AG04450 (cell line): ENCODE measurements at regions of chr1 and their contacts with region 1.

Region 1: DNA sequence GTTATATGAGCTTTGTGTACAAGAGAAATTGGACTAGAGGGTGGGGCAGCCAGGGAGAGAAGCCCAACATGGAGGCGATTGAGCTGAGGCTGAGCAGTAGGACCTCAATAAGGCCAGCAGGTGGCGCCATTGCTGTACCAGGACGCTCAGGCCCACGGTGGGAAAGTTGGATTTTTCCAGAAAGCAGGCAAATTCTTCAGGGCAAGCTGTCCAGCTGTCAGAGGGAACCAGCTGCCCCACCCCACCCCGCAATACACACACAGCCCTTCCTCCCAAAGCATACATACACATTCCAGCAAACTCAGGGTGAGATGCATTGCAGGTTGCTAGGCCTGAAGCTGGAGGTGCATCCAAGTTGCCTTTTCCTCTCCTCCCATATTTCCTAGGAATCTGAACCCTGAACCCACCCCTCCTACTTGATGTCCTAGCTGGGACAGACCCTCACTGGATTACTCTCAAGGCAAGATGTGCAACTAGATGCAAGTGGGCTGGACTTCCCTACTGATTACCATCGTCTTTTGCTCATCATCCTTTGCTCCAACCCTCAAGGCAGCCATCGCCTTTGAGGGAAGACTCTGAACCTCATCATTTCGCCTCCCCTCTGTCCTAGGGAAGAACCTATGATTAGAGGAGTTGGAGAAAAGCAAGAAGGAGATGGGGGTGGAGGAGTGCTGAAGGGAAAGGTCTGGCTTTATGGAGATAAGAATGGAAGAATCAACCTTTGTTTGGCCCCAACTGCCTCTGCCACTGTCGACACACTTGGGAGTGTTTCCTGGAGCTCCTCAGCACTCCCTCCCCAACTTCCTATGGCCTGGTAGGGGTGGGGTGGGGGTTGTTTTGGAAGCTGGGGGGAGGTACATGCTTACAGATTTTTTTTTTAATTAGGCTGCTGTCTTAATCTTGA is 25.5 kb downstream of the CD34 start:
- DNase-seq: peak; percentile 76
- H3K4me3 ChIP-seq: no peak overlapping the region
- H3K27ac ChIP-seq: no peak overlapping the region
- H3K27me3 ChIP-seq: peaks cover 3% of the 10 kb centered on the region
- CTCF ChIP-seq: peak; percentile 98

Region 2: DNA sequence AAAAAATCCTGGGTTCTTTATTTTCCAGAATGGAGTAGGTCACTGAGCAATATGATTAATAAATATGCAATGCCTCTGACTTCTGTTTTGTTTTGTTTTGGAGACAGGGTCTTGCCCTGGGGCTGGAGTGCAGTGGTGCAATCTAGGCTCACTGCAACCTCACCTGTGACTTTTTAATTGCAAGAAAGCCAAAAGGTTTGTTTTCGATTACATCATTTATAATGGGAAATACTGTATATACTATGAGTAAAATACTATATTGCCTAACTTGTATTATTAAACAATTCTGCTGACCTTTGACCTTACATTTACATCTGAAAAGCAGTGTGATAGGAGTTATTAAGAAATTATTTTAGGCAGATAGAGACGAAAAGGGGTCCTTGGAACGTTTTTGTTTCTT is 145.2 kb before region 1 on chr1:
- CTCF ChIA-PET with region 1: no interaction called
- POLR2A ChIA-PET with region 1: no interaction called
- DNase-seq: no peak
- H3K4me3 ChIP-seq: no peak overlapping the region
- H3K27ac ChIP-seq: no peak overlapping the region
- H3K27me3 ChIP-seq: no peaks in the 10 kb centered on the region
- CTCF ChIP-seq: no peak

Region 3: DNA sequence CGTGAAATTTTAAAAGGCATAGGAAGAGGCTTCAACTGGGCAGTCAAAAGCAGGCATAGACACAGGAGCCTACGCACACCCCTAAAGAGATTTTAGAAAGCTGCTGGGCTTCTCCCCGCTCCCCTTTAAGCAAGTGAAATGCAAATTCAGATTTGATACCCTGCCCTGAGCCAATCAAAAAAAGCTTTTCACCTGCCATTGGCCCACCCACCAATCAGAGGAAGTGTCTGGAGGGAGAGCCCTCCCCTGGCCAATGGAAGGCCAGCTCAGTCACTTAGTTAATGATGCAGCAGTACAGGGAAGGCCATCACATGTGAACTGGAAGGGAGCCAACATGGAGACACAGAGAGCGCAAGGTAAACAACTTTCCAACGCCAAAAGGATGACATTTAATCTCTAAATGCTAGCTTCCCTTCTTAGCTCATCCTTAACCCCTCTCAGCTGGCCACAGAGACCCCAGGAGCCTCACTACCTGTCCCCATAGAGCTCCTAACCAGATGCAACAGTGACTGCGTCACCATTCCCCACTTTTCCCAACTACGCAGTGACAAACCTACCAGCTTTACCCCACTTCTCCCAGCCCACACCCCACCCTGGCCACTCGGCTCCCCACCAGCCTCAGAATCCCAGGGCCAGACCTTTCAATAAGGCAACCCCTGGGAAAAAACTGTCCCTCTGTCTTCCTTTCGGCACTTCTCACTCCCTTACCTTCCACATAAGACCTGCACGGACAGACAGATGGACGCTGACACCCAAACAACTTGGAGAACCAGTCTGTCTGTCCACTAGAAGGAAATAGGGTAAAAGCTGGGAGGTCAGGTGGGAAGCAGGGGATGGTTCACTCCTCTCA is 62.6 kb before region 1 on chr1:
- CTCF ChIA-PET with region 1: interaction called, 21 read pairs
- POLR2A ChIA-PET with region 1: no interaction called
- DNase-seq: no peak
- H3K4me3 ChIP-seq: no peak overlapping the region
- H3K27ac ChIP-seq: peak overlapping the region; percentile 21
- H3K27me3 ChIP-seq: no peaks in the 10 kb centered on the region
- CTCF ChIP-seq: no peak

Region 4: GRCh38 chr1:207863893-207864535 is 21.4 kb before region 1 on chr1:
- CTCF ChIA-PET with region 1: interaction called, 247 read pairs
- POLR2A ChIA-PET with region 1: no interaction called
- DNase-seq: no peak
- H3K4me3 ChIP-seq: no peak overlapping the region
- H3K27ac ChIP-seq: no peak overlapping the region
- H3K27me3 ChIP-seq: no peaks in the 10 kb centered on the region
- CTCF ChIP-seq: no peak

Region 5: DNA sequence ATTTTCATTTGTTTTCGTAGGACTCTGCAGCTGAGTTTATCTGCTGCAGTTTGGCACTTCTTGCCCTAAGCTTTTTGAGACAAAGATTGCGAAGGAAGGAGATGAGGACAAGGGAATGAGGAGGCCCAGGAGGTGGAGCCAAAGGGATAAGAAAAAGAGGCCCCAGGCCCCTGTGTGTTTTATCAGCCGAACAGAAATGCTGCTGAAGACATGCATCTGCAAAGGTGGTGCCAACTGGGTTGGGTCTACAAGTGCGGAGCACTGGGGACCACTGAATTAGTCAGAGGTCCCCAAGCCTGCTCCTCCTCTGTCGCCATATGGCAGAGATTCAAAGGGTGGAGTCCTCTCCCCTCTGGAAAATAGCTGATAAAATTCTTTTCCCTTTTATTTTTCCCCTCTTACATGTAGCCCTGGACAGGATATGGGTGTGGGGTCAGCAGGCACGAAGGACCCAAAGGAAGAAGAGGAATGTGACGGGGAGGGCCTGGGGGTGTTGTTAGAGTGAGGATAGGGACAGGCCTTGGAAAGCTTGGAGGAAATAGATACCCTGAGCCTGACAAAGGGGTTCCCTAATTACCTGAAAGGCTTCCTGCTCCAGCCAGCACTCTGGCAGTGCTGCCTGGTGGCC is 22.8 kb after region 1 on chr1:
- CTCF ChIA-PET with region 1: interaction called, 13 read pairs
- POLR2A ChIA-PET with region 1: no interaction called
- DNase-seq: no peak
- H3K4me3 ChIP-seq: no peak overlapping the region
- H3K27ac ChIP-seq: no peak overlapping the region
- H3K27me3 ChIP-seq: peaks cover 29% of the 10 kb centered on the region
- CTCF ChIP-seq: no peak

Region 6: GRCh38 chr1:207958376-207959139 is 73.2 kb after region 1 on chr1:
- CTCF ChIA-PET with region 1: interaction called, 374 read pairs
- POLR2A ChIA-PET with region 1: interaction called, 11 read pairs
- DNase-seq: no peak
- H3K4me3 ChIP-seq: peak overlapping the region; percentile 49
- H3K27ac ChIP-seq: no peak overlapping the region
- H3K27me3 ChIP-seq: peaks cover 21% of the 10 kb centered on the region
- CTCF ChIP-seq: no peak

Region 7: DNA sequence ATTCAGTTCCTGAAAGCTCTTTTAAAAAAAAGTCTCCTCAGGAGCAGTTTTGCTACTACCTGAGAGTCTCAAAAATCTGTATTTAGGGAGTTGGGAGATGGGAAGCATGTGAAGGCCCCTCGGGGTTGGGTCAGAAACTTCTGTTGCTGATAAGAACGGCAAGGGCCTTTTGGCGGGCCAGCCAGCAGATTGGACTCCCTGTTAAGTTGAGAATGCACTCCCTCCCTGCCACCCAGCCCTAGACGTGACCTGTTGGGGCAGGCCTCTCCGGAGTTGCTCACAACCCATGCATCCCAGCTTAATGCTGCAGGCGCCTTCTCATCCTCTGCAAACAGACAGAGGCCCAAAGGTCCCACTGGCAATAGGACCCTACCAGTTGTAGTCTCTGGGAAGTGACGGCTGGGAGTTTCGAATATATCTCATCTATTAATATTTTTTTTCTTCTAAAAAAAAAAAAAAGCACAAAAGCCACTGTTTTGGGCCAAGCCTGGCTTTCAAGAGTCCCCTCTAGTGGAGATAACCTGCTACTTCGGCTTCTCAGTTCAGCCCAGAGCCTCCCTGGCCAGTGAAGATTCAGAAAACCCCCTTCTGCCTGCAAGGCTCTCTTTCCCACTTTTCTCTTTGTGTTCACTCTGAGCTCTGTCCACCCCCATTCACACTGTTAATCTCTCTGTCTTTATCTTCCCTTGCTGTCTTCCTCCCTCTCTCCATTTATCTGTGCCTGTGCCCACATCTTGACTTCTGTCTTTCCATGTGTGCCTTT is 353.5 kb after region 1 on chr1:
- CTCF ChIA-PET with region 1: interaction called, 15 read pairs
- POLR2A ChIA-PET with region 1: no interaction called
- DNase-seq: no peak
- H3K4me3 ChIP-seq: no peak overlapping the region
- H3K27ac ChIP-seq: no peak overlapping the region
- H3K27me3 ChIP-seq: peaks cover 25% of the 10 kb centered on the region
- CTCF ChIP-seq: peak; percentile 84